HCT116 (cell line): ENCODE measurements at regions of chr13 and their contacts with region 1.

Region 1: GRCh38 chr13:91017031-91017668 is 330.3 kb upstream of the MIR17HG start:
- DNase-seq: peak; percentile 34
- ATAC-seq: peak; percentile 92
- H3K4me3 ChIP-seq: peak overlapping the region; percentile 10 to 36
- H3K27ac ChIP-seq: no peak overlapping the region
- H3K4me1 ChIP-seq: no peaks in the 10 kb centered on the region
- H3K27me3 ChIP-seq: no peaks in the 10 kb centered on the region
- CTCF ChIP-seq: peak; percentile 28 to 77 (median 63); a peak in 5 of 6 replicates
- POLR2A ChIP-seq: no peak
- RAD21 ChIP-seq: peak; percentile 65

Region 2: DNA sequence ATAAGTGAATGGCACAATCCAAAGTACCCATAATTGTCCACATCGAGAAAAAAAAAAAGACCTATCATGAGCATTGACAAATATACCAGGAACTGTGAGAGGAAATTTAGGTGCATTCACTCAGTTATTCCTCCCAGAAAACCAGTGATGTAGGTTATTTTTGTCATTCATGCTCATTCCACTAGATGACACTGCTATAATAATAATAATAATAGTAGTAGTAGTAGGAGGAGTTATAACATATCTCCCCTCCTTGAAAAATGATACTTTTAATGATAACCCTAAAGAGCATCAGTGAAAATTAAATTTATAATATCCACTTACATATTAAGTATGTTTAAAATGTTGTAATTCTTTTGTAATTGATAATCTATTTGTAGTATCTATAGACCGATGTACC is 133.6 kb before region 1 on chr13:
- CTCF ChIA-PET with region 1: interaction called, 3 read pairs
- POLR2A ChIA-PET with region 1: no interaction called
- RAD21 ChIA-PET with region 1: no interaction called
- intact Hi-C with region 1: loop called (anchors 5 kb)
- DNase-seq: no peak
- ATAC-seq: no peak
- H3K4me3 ChIP-seq: no peak overlapping the region
- H3K27ac ChIP-seq: no peak overlapping the region
- H3K4me1 ChIP-seq: no peaks in the 10 kb centered on the region
- H3K27me3 ChIP-seq: no peaks in the 10 kb centered on the region
- CTCF ChIP-seq: peak in 1 of 3 experiments; percentile 15; a peak in 2 of 6 replicates
- POLR2A ChIP-seq: no peak
- RAD21 ChIP-seq: peak; percentile 28

Region 3: GRCh38 chr13:91078093-91078679 is 61.0 kb after region 1 on chr13:
- CTCF ChIA-PET with region 1: no interaction called
- POLR2A ChIA-PET with region 1: no interaction called
- RAD21 ChIA-PET with region 1: no interaction called
- intact Hi-C with region 1: no loop called
- DNase-seq: no peak
- ATAC-seq: no peak
- H3K4me3 ChIP-seq: no peak overlapping the region
- H3K27ac ChIP-seq: no peak overlapping the region
- H3K4me1 ChIP-seq: no peaks in the 10 kb centered on the region
- H3K27me3 ChIP-seq: no peaks in the 10 kb centered on the region
- CTCF ChIP-seq: peak in 2 of 3 experiments; percentile 22 to 55; a peak in 3 of 6 replicates
- POLR2A ChIP-seq: no peak
- RAD21 ChIP-seq: no peak

Region 4: GRCh38 chr13:91690944-91691343 is 673.8 kb after region 1 on chr13:
- CTCF ChIA-PET with region 1: no interaction called
- POLR2A ChIA-PET with region 1: no interaction called
- RAD21 ChIA-PET with region 1: no interaction called
- intact Hi-C with region 1: no loop called
- DNase-seq: no peak
- ATAC-seq: no peak
- H3K4me3 ChIP-seq: no peak overlapping the region
- H3K27ac ChIP-seq: no peak overlapping the region
- H3K4me1 ChIP-seq: no peaks in the 10 kb centered on the region
- H3K27me3 ChIP-seq: no peaks in the 10 kb centered on the region
- CTCF ChIP-seq: no peak
- POLR2A ChIP-seq: no peak
- RAD21 ChIP-seq: no peak